ENCODE measurements at regions of chr5 and their contacts with region 1.

Region 1: DNA sequence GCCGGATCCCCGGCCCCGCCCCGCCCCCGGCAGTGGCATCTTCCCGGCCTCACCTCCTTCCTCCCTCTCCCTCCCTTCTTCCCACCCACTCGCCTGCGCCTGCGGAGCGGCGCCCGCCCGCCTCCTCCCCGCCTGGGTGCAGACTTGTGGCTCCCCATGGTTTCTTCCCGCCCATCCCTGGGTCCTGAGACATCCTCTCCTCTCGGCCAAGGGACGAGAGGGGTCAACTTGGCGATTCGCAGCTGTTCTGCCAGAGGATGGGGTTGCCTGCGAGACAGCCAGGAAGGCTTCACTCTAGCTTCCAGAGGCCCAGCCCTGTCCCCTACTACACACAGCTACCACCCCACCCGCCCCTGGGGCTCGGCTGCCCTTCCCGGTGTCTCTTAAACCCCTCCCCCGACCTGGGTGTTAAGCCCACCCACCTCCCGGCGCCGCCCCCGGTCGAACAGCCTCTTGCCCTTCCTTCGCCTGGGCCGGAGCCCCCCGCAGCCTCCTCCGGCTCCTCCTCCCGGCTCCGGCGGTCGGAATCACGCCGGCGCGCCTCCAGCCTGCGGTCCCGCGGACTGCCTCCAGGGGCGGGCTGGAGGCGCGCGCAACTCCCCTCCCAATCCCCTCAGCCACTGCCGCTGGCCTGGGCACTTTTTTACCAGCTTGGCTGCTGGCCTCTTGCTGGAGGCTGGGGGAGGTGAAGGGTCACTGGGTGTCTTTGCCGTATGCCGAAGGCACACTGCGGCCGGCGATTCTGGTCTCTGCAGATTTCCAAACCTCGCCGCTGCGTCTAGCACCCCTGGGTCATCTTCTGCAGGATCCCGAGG is 1.9 kb downstream of the JADE2 start:
- DNase-seq: peak; percentile 84
- H3K4me3 Mint-ChIP-seq: peak overlapping the region; percentile 96
- H3K27ac Mint-ChIP-seq: peak overlapping the region; percentile 98
- H3K4me1 Mint-ChIP-seq: peaks cover 48% of the 10 kb centered on the region
- H3K27me3 Mint-ChIP-seq: no peaks in the 10 kb centered on the region

Region 2: GRCh38 chr5:133714161-133714915 is 813.0 kb before region 1 on chr5:
- CTCF ChIA-PET with region 1: no interaction called
- POLR2A ChIA-PET with region 1: no interaction called
- intact Hi-C with region 1: no loop called
- DNase-seq: no peak
- H3K4me3 Mint-ChIP-seq: no peak overlapping the region
- H3K27ac Mint-ChIP-seq: no peak overlapping the region
- H3K4me1 Mint-ChIP-seq: no peaks in the 10 kb centered on the region
- H3K27me3 Mint-ChIP-seq: peaks cover 14% of the 10 kb centered on the region

Region 3: DNA sequence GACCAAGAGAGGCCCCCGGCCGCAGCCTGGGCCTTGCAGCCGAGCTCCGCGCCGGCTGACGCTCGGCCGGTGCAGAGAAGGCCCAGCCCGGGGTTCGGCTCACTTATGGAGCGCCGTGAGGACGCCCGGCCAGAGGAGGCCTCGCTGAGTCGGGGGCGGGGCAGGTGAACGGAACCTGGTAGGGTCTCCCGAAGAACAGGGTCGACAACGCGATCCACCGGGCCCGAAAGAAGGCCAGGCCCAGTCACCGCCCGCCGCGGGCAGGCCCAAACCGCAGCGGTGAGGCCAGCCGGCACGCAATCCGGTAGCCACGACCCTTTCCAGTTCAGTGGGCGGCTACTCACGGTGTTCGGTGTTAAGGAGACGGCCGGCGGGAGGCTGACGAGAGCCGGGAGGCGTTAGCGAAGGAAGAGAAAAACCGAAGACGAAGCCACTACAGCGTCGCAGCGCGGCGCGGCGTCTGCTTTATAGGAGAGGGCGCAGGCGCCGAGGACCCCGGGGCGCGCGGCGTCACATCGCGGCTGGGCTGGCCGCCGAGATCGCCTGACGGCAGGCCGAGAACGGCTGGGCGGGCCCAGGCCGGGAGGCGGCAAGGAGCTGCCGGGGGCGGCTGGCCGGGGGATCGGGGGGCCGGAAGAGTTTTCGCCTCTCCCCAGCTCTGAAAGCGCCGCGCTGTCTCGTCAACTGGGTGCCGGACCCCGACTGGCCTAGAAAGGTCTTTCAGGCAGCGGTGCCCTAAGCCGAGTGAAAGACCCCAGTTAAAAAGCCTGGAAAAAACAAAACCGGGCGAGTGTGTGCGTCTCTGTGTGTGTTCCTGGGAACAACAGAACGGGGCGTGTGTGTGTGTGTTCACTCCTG is 350.6 kb before region 1 on chr5 and contains the start of gene SKP1:
- CTCF ChIA-PET with region 1: interaction called, 4 read pairs
- POLR2A ChIA-PET with region 1: no interaction called
- intact Hi-C with region 1: loop called (anchors 10 kb)
- DNase-seq: peak; percentile 88
- H3K4me3 Mint-ChIP-seq: peak within 1 kb of the TSS; percentile 95
- H3K27ac Mint-ChIP-seq: peak within 1 kb of the TSS; percentile 96
- H3K4me1 Mint-ChIP-seq: peaks cover 33% of the 10 kb centered on the region
- H3K27me3 Mint-ChIP-seq: no peaks in the 10 kb centered on the region
- total RNA-seq, gene SKP1: 284 to 286 TPM

Region 4: DNA sequence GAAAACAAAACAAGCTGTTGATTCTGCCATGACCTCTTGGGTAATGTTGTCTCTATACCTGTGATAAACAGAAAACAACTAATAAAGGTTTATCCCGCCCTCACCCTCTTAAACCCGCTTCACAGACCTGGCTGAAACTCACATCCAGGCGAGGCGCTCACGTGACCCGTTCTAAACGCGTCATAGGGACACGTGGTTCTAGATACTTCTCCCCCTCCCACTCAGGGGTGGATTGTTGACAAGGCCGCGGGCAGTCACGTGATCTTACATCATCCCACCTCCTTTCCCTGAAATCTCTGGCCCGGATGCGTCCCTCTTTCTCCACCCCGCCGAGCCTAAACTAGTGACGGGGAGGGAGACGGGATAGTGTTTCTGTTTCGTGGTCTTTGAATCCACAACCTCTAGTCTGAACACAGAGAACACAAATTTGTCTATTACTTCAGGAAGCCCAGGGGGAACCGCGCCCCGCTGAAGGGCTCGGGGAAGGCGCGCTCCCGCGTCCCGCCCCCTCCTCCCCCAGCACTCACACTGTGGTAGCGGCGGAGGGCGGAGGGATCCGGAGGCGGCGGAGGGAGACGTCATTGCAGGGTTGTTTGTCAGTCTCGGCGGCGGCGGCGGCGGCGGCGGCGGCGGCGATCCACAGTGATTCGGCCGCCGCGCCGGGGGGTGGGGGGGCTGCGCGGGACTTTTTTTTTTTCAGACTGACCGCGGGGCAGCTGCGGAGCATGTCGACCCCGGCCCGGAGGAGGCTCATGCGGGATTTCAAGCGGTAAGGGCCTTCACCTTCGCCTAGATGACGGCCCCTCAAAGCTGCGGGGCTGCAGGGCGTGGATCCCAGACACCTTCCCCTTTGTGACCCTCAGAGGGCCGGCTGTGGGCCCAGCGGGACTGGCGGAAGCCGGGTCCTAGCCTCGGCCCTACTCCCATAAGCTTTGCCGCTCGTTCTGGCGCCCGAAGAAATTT is 156.2 kb before region 1 on chr5 and contains the start of gene UBE2B:
- CTCF ChIA-PET with region 1: interaction called, 16 read pairs
- POLR2A ChIA-PET with region 1: interaction called, 8 read pairs
- intact Hi-C with region 1: loop called (anchors 1 kb)
- DNase-seq: peak; percentile 98
- H3K4me3 Mint-ChIP-seq: peak within 1 kb of the TSS; percentile 92
- H3K27ac Mint-ChIP-seq: peak within 1 kb of the TSS; percentile 96
- H3K4me1 Mint-ChIP-seq: peaks cover 55% of the 10 kb centered on the region
- H3K27me3 Mint-ChIP-seq: peaks cover 2% of the 10 kb centered on the region
- total RNA-seq, gene UBE2B: 124 TPM

Region 5: GRCh38 chr5:134394932-134395331 is 132.4 kb before region 1 on chr5:
- CTCF ChIA-PET with region 1: no interaction called
- POLR2A ChIA-PET with region 1: no interaction called
- intact Hi-C with region 1: no loop called
- DNase-seq: no peak
- H3K4me3 Mint-ChIP-seq: no peak overlapping the region
- H3K27ac Mint-ChIP-seq: no peak overlapping the region
- H3K4me1 Mint-ChIP-seq: peaks cover 3% of the 10 kb centered on the region
- H3K27me3 Mint-ChIP-seq: no peaks in the 10 kb centered on the region

Region 6: GRCh38 chr5:134436523-134437339 is 90.6 kb before region 1 on chr5:
- CTCF ChIA-PET with region 1: interaction called, 3 read pairs
- POLR2A ChIA-PET with region 1: interaction called, 3 read pairs
- intact Hi-C with region 1: loop called (anchors 1 kb)
- DNase-seq: peak; percentile 84
- H3K4me3 Mint-ChIP-seq: peak overlapping the region; percentile 9
- H3K27ac Mint-ChIP-seq: peak overlapping the region; percentile 77
- H3K4me1 Mint-ChIP-seq: peaks cover 33% of the 10 kb centered on the region
- H3K27me3 Mint-ChIP-seq: no peaks in the 10 kb centered on the region

Region 7: DNA sequence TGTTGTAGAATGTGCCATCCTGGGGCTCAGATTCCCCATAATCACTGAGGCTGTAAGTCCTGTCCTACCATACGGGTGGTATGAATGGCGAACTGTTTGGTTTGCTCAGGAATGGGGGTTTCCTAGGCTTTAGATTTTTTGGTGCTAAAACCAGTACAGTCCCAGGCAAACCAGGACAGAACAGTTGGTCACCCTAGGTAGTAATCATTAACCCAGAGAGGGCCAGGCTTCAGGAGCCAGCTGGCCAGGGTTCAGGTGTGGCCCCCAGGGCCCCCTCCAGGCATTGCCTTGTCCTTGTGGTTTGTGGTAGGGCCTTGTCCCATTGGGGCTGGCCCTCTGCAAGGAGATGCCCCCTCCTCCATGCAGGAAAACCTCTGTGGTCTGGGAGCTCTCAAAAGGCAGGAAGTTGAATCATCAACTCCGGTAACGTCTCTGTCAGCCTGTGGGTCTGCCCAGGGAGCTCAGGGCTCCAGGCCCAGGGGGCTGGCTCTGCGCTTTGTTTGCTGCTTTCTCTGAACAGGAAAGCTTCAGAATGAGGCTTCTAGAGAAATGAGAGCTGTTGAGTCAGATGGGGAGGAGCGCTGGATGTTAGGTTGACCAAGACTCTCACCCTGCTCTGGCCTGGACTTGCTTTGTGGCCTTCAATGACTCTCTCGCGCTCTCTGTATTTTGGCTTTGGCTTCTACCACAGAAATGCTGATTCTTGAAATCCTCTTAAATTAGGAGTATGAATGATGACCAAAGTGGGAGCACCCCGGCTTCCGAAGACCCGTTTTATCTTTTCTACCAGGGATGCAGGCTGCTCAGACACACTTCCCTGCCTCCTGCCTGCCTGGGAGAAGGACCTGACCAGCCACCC is 24.0 kb before region 1 on chr5:
- CTCF ChIA-PET with region 1: interaction called, 8 read pairs
- POLR2A ChIA-PET with region 1: interaction called, 10 read pairs
- intact Hi-C with region 1: loop called (anchors 1 kb)
- DNase-seq: peak; percentile 92
- H3K4me3 Mint-ChIP-seq: peak overlapping the region; percentile 58
- H3K27ac Mint-ChIP-seq: peak overlapping the region; percentile 97
- H3K4me1 Mint-ChIP-seq: peaks cover 31% of the 10 kb centered on the region
- H3K27me3 Mint-ChIP-seq: no peaks in the 10 kb centered on the region

Region 8: GRCh38 chr5:134541736-134542376 is 14.5 kb after region 1 on chr5:
- CTCF ChIA-PET with region 1: interaction called, 43 read pairs
- POLR2A ChIA-PET with region 1: interaction called, 15 read pairs
- intact Hi-C with region 1: loop called (anchors 1 kb)
- DNase-seq: peak; percentile 49
- H3K4me3 Mint-ChIP-seq: no peak overlapping the region
- H3K27ac Mint-ChIP-seq: peak overlapping the region; percentile 66
- H3K4me1 Mint-ChIP-seq: peaks cover 67% of the 10 kb centered on the region
- H3K27me3 Mint-ChIP-seq: no peaks in the 10 kb centered on the region

Region 9: GRCh38 chr5:134577796-134578363 is 50.5 kb after region 1 on chr5:
- CTCF ChIA-PET with region 1: interaction called, 48 read pairs
- POLR2A ChIA-PET with region 1: interaction called, 5 read pairs
- intact Hi-C with region 1: loop called (anchors 1 kb)
- DNase-seq: peak; percentile 87
- H3K4me3 Mint-ChIP-seq: no peak overlapping the region
- H3K27ac Mint-ChIP-seq: peak overlapping the region; percentile 63
- H3K4me1 Mint-ChIP-seq: peaks cover 8% of the 10 kb centered on the region
- H3K27me3 Mint-ChIP-seq: no peaks in the 10 kb centered on the region